ENCODE measurements at regions of chr6 and their contacts with region 1.

Region 1: GRCh38 chr6:80004173-80005072 is at the start of gene TTK:
- DNase-seq: peak; percentile 84 to 94 (median 91)
- ATAC-seq: peak; percentile 100
- H3K4me3 ChIP-seq: peak within 1 kb of the TSS; percentile 94
- H3K4me3 Mint-ChIP-seq: peak within 1 kb of the TSS; percentile 80 to 97 (median 90)
- H3K27ac ChIP-seq: peak within 1 kb of the TSS; percentile 80
- H3K27ac Mint-ChIP-seq: peak within 1 kb of the TSS; percentile 65 to 97 (median 94)
- H3K4me1 ChIP-seq: peaks cover 9 to 10% of the 10 kb centered on the region in 2 donors
- H3K4me1 Mint-ChIP-seq: peaks cover 2 to 41% (median 19%) of the 10 kb centered on the region in 7 donors
- H3K27me3 ChIP-seq: no peaks in the 10 kb centered on the region
- H3K27me3 Mint-ChIP-seq: peaks cover 0 to 5% (median 0%) of the 10 kb centered on the region in 5 donors
- total RNA-seq, gene TTK: 0.13 to 22.4 (median 0.81) TPM

Region 2: DNA sequence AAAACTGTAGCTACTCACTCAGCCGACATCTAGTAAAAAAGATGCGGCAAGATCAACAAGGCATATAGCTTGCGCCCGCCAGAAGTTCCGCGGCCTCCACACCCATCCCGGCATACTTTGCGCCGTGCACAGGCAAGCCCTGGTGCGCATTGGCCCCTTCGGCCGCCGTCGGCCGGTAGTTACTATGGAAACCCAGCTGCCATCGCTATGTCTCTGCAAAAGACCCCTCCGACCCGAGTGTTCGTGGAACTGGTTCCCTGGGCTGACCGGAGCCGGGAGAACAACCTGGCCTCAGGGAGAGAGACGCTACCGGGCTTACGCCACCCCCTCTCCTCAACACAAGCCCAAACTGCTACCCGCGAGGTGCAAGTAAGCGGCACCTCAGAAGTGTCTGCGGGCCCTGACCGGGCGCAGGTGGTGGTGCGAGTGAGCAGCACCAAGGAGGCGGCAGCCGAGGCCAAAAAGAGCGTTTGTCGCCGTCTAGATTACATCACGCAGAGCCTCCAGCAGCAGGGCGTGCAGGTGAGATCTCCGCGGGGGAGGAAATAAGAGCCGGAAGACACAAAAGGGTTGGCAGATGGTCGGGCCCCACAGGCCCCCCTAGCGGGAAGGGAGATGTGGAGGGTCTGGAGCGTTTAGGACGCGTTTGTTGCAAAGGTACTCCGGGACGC is 1136.9 kb before region 1 on chr6 and contains the start of gene IRAK1BP1:
- CTCF ChIA-PET with region 1: no interaction called
- POLR2A ChIA-PET with region 1: no interaction called
- intact Hi-C with region 1: loop called in 1 of 2 experiments (anchors 1 kb)
- DNase-seq: peak; percentile 39 to 79 (median 76)
- ATAC-seq: peak; percentile 94
- H3K4me3 ChIP-seq: peak within 1 kb of the TSS; percentile 85
- H3K4me3 Mint-ChIP-seq: peak within 1 kb of the TSS; percentile 91 to 100 (median 98)
- H3K27ac ChIP-seq: peak within 1 kb of the TSS; percentile 68
- H3K27ac Mint-ChIP-seq: peak within 1 kb of the TSS; percentile 87 to 97 (median 96)
- H3K4me1 ChIP-seq: peaks cover 0 to 5% of the 10 kb centered on the region in 2 donors
- H3K4me1 Mint-ChIP-seq: peaks cover 6 to 33% (median 27%) of the 10 kb centered on the region in 7 donors
- H3K27me3 ChIP-seq: no peaks in the 10 kb centered on the region
- H3K27me3 Mint-ChIP-seq: no peaks in the 10 kb centered on the region
- total RNA-seq, gene IRAK1BP1: 0.71 to 3.6 (median 3.1) TPM

Region 3: GRCh38 chr6:79233611-79234149 is 770.7 kb before region 1 on chr6:
- CTCF ChIA-PET with region 1: no interaction called
- POLR2A ChIA-PET with region 1: no interaction called
- intact Hi-C with region 1: loop called (anchors 1 to 2 kb)
- DNase-seq: peak; percentile 34 to 77 (median 54)
- ATAC-seq: peak; percentile 63
- H3K4me3 ChIP-seq: peak overlapping the region; percentile 89
- H3K4me3 Mint-ChIP-seq: peak overlapping the region; percentile 92 to 100 (median 98)
- H3K27ac ChIP-seq: peak overlapping the region; percentile 62
- H3K27ac Mint-ChIP-seq: peak overlapping the region; percentile 64 to 96 (median 90)
- H3K4me1 ChIP-seq: peaks cover 4 to 8% of the 10 kb centered on the region in 2 donors
- H3K4me1 Mint-ChIP-seq: peaks cover 9 to 42% (median 30%) of the 10 kb centered on the region in 7 donors
- H3K27me3 ChIP-seq: no peaks in the 10 kb centered on the region
- H3K27me3 Mint-ChIP-seq: no peaks in the 10 kb centered on the region

Region 4: GRCh38 chr6:79536954-79537747 is 467.3 kb before region 1 on chr6 and contains the start of gene LCA5:
- CTCF ChIA-PET with region 1: no interaction called
- POLR2A ChIA-PET with region 1: no interaction called
- intact Hi-C with region 1: loop called (anchors 1 kb)
- DNase-seq: peak; percentile 65 to 93 (median 89)
- ATAC-seq: peak; percentile 99
- H3K4me3 ChIP-seq: peak within 1 kb of the TSS; percentile 72
- H3K4me3 Mint-ChIP-seq: no peak within 1 kb of the TSS
- H3K27ac ChIP-seq: peak within 1 kb of the TSS; percentile 50
- H3K27ac Mint-ChIP-seq: no peak within 1 kb of the TSS
- H3K4me1 ChIP-seq: peaks cover 4 to 6% of the 10 kb centered on the region in 2 donors
- H3K4me1 Mint-ChIP-seq: peaks cover 0 to 7% (median 0%) of the 10 kb centered on the region in 7 donors
- H3K27me3 ChIP-seq: peaks cover 0 to 4% of the 10 kb centered on the region in 2 donors
- H3K27me3 Mint-ChIP-seq: peaks cover 0 to 20% (median 6%) of the 10 kb centered on the region in 5 donors
- total RNA-seq, gene LCA5: 0.10 to 0.65 (median 0.24) TPM

Region 5: GRCh38 chr6:79949233-79949632 is 55.2 kb before region 1 on chr6:
- CTCF ChIA-PET with region 1: interaction called, 3 read pairs
- POLR2A ChIA-PET with region 1: interaction called, 6 read pairs
- intact Hi-C with region 1: loop called (anchors 1 kb)
- DNase-seq: peak in 8 of 9 donors; percentile 36 to 61 (median 44)
- ATAC-seq: peak; percentile 65
- H3K4me3 ChIP-seq: no peak overlapping the region
- H3K4me3 Mint-ChIP-seq: peak overlapping the region in 5 of 10 donors; percentile 10 to 55 (median 16)
- H3K27ac ChIP-seq: no peak overlapping the region
- H3K27ac Mint-ChIP-seq: peak overlapping the region in 1 of 9 donors; percentile 56
- H3K4me1 ChIP-seq: peaks cover 4 to 16% of the 10 kb centered on the region in 2 donors
- H3K4me1 Mint-ChIP-seq: peaks cover 13 to 25% (median 19%) of the 10 kb centered on the region in 7 donors
- H3K27me3 ChIP-seq: no peaks in the 10 kb centered on the region
- H3K27me3 Mint-ChIP-seq: peaks cover 32 to 57% (median 43%) of the 10 kb centered on the region in 5 donors

Region 6: DNA sequence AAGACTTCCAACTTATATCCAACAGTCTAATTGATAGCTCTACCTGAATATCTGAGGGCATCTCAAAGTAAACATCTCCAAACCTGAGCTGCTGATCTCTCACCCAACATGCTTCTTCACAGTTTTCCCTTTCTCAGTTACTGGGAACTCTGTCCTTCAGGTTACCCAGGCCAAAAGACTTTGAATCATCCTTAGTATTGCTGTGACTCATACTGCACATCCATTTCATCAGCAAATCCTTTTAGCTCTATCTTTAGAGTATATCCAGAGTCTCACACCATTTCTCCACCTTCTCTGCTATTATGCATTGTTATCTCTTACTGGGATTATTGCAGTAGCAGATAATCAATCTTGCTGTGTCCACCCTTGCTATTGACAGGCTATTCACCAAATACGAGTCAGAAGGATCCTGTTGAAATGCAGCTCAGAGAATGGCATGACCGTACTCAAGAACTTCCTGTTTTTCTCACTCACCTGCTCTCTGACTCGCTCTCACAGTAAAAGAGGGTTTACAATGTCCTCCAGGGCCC is 159.3 kb after region 1 on chr6:
- CTCF ChIA-PET with region 1: no interaction called
- POLR2A ChIA-PET with region 1: no interaction called
- intact Hi-C with region 1: loop called in 1 of 2 experiments (anchors 5 kb)
- DNase-seq: peak in 6 of 9 donors; percentile 0 to 33 (median 24)
- ATAC-seq: peak; percentile 63
- H3K4me3 ChIP-seq: peak overlapping the region; percentile 2
- H3K4me3 Mint-ChIP-seq: no peak overlapping the region
- H3K27ac ChIP-seq: peak overlapping the region; percentile 14
- H3K27ac Mint-ChIP-seq: no peak overlapping the region
- H3K4me1 ChIP-seq: peaks cover 7 to 17% of the 10 kb centered on the region in 2 donors
- H3K4me1 Mint-ChIP-seq: peaks cover 0 to 4% (median 0%) of the 10 kb centered on the region in 7 donors
- H3K27me3 ChIP-seq: no peaks in the 10 kb centered on the region
- H3K27me3 Mint-ChIP-seq: no peaks in the 10 kb centered on the region

Measured in naive thymus-derived CD4-positive, alpha-beta T cell (primary cell).